ENCODE measurements at regions of chr16 and their contacts with region 1.

Region 1: GRCh38 chr16:66483689-66484481 is 56.8 kb downstream of the BEAN1 start:
- DNase-seq: peak; percentile 93

Region 2: GRCh38 chr16:66344533-66345145 is 139.2 kb before region 1 on chr16:
- intact Hi-C with region 1: loop called (anchors 5 kb)
- DNase-seq: no peak

Region 3: DNA sequence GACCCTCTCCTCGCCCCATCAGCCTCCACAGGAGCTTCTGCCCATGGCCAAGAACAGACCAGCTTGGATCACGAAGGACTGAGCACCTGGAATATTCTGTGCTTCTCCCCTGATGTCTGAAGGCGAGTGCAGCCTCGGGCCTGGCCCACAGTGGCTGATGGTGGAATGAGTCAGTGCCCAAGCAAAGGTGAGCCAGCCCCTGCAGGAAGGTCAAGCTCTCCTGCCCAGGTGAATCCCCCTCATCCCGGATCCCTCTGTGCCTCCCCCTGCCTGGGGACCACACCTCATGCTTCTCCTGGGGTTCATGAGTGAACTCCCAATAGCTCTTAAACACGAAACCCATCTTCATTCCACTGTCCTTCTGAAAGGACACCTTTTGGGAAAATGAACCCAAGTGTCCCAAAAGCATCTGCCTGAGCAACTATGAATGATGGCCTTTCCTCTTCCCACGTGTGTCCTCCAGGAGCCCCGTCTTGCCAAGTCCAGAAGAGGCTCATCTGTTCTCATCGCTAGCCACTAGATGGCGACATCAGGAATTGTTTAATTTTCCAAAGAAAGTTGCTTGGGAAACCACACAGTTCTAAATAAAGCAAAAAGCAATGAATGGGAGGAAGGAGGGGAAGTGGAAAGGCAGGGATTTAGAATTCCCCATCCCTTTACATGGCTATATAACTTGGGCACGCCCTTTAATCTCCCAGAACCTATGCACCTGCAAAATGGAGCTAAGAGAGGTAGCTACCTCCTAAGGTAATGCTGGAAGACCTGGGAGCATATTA is 126.5 kb before region 1 on chr16:
- intact Hi-C with region 1: loop called (anchors 5 kb)
- DNase-seq: no peak

Region 4: GRCh38 chr16:66406534-66407221 is 77.2 kb before region 1 on chr16:
- intact Hi-C with region 1: loop called (anchors 2 kb)
- DNase-seq: peak; percentile 95

Region 5: DNA sequence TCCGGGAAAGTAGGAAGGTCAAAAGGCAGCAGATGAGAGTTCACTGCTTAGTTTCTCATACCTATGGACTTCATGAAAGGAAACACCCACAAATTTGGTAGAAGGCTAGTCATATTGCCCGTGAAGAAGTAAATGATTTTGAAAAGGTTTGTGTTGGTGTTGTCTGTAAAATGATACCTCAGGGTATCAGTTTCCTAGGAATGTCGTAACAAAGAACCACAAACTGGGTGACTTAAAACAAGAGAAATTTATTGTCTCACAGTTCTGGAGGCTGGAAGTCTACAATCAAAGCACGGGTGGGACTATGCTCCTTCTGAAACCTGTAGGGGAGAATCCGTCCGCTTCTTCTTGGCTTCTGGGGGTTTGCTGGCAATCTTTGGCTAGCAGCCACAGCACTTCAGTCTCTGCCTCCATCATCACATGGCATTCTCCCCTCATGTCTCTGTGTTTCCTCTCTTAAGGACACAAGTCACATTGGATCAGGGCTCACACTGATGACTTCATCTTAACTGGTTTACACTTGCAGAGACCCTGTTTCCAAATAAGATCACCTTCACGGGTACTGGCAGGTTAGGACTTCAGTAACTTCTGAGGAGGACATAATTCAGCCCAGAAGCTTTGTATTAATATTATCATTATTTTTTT is 348.9 kb after region 1 on chr16:
- intact Hi-C with region 1: no loop called
- DNase-seq: no peak

Region 6: DNA sequence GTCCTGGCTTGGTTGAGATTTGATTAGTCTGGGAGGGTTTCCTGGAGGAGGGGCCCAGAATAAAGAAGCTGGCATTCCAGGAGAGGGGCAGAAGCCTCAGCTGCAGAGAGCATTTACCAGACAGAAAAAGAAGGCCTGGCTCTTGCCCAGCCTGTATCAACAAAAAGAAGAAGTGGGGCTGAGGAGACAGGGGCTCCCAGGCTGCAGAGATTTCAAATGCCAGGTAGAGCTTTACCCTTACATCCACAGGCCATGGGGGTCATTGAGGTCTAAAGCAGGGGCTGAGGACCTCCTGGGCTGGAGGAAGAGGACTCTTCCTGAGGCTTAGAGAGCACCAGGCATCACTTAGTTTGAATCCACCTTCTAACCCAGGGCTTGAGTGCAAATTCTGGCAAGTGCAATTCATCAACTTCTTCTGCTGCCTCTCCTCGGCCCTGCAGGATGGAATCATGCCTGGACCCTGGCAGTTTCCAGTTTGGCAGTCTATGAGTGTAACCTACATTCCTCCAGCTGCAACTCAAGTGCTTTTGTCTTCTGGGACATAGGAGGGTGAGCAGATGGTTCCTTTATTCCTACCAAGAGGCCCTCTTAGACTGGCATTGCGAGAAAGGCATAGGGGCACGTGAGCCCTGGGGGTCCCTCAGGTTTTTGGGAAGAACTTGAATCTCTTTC is 375.6 kb after region 1 on chr16:
- intact Hi-C with region 1: loop called (anchors 10 kb)
- DNase-seq: no peak

Measured in cardiac septum (tissue), 1 donor.